ENCODE measurements at regions of chrX and their contacts with region 1.

Region 1: GRCh38 chrX:71565474-71566041 is 12.7 kb upstream of the GCNA start:
- DNase-seq: no peak
- H3K4me3 ChIP-seq: no peak overlapping the region
- H3K27ac ChIP-seq: no peak overlapping the region
- H3K4me1 ChIP-seq: no peaks in the 10 kb centered on the region
- H3K27me3 ChIP-seq: no peaks in the 10 kb centered on the region
- CTCF ChIP-seq: no peak
- POLR2A ChIP-seq: no peak

Region 2: GRCh38 chrX:71081330-71082148 is 484.0 kb before region 1 on chrX:
- intact Hi-C with region 1: no loop called
- DNase-seq: no peak
- H3K4me3 ChIP-seq: no peak overlapping the region
- H3K27ac ChIP-seq: no peak overlapping the region
- H3K4me1 ChIP-seq: no peaks in the 10 kb centered on the region
- H3K27me3 ChIP-seq: peaks cover 0 to 4% (median 0%) of the 10 kb centered on the region in 7 donors
- CTCF ChIP-seq: no peak
- POLR2A ChIP-seq: no peak

Region 3: DNA sequence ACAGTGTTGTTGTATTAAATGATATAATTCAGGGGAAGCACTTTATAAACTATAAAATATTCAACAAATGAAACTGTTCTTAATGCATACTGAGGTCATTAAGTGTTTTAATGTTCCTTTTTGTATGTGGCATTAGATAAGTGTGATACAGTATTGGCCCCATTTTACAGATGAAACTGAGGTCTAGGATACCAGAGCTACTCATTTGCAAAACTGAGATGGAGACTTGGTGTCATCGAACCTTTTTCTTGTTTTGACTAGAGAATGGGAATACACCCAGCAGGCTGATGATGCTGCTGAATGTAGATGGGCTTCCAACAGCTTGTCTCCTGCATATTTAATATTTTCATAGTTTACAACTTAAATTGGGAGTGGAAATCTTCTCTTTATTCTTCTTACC is 164.8 kb before region 1 on chrX:
- intact Hi-C with region 1: loop called (anchors 10 kb)
- DNase-seq: no peak
- H3K4me3 ChIP-seq: no peak overlapping the region
- H3K27ac ChIP-seq: no peak overlapping the region
- H3K4me1 ChIP-seq: no peaks in the 10 kb centered on the region
- H3K27me3 ChIP-seq: no peaks in the 10 kb centered on the region
- CTCF ChIP-seq: no peak
- POLR2A ChIP-seq: no peak